Posterior vena cava (tissue), 2 donors: ENCODE measurements at regions of chr12 and their contacts with region 1.

Region 1: GRCh38 chr12:91355150-91356006 is 172.8 kb upstream of the DCN start:
- DNase-seq: peak; percentile 86

Region 2: DNA sequence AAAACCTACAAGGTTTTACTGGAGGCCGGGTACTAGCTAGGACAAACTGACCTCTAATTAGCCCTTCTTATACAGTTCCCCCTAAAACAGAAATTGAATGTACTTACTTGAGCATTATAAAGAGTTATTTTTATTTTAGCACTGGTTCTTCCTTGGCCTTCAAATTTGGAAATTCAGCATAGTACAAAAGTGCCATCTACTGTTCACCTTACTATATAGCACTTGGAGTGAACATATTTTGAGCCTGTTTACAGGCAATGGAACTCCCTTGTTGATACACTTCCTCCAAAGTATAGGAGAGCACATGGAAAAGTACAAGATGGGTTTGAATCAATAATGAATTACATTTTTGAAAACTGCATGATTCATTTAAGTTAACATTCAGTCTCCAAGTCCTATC is 1825.6 kb before region 1 on chr12:
- intact Hi-C with region 1: loop called in 1 of 2 experiments (anchors 5 kb)
- DNase-seq: no peak

Region 3: DNA sequence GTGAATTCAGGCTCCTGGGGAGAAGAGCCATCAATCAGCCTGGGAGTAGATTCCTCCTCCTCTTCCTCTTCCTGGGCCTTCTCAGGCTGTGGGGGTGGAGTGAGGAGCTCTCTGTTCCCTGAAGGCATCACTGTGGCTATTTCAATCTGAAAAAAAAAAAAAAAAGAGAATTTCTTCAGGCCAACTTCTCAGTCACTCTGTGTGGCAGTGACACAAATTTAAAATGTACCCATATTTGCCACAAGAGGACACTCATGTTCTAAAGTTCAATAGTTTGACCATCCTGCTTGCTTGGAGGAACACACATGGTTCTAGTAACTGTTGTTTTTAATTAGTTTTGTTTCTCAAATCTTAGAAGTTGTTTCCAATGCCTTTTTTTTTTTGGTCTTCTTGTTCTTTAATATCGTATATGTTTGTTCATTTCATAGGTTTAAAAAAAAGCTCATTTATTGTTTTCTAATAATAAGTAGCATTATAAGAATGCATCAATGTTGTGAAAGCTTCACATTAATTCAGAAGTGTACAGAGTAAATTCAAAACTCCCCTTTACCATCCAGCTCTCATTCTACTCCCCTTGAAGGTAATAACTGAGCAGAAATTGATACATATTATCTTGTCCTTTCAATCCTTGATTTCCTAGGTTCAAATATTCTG is 377.1 kb before region 1 on chr12:
- intact Hi-C with region 1: loop called (anchors 10 kb)
- DNase-seq: no peak

Region 4: DNA sequence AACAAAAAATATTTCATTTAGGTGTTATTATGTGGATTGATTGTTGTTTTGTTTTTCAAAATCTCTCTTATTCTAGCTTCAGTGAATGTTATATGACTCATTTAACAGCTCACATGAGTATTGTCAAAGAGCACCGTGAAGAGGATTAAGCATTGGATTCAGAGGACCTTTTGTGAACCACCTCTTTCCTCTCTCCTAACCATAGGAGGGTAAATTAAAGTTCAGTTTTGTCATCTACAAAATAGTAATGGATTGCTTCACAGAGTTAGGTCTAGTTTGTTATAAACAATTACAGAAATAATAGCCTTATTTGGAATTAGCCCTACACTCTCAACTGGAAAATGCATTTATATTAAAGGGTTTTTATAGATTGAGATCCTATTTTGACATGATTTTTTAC is 296.6 kb before region 1 on chr12:
- intact Hi-C with region 1: no loop called
- DNase-seq: no peak

Region 5: DNA sequence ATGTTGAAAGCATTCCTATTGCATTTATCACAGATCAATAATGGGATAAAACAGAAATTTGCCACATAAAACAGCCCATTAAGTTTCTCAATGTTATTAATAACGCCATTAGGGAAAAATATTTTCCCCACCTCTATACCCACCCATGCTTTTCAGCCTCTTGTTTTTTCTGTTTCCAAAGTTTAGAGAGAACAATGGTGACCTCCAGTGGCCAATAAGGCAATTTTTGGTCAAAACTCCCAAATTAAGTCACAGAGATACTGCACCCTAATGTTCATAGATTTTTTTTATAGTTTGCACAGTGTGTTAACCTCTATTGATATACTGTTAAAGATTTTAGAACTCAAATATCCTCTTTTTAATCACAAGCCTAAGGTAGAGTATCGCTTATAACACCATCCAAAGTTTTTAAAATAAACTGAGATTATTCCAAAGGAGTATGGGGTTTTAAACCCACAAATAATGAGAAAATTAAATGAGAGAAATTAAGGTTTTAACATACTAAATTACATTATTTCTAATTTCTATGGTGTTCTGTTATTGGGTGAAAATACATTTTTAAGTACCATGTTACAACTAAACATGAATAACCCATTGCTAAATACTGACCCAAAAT is 12.0 kb after region 1 on chr12:
- intact Hi-C with region 1: no loop called
- DNase-seq: no peak